PC-3 (cell line): ENCODE measurements at regions of chr3 and their contacts with region 1.

Region 1: GRCh38 chr3:168459226-168459784 is 363.6 kb upstream of the GOLIM4 start:
- DNase-seq: peak; percentile 62
- ATAC-seq: peak; percentile 43
- H3K4me3 ChIP-seq: no peak overlapping the region
- H3K27ac ChIP-seq: 0 out of 2 replicates have a peak overlapping the region, but pooled peaks have one; percentile 27
- H3K4me1 ChIP-seq: peaks cover 17% of the 10 kb centered on the region
- H3K27me3 ChIP-seq: no peaks in the 10 kb centered on the region
- CTCF ChIP-seq: no peak

Region 2: DNA sequence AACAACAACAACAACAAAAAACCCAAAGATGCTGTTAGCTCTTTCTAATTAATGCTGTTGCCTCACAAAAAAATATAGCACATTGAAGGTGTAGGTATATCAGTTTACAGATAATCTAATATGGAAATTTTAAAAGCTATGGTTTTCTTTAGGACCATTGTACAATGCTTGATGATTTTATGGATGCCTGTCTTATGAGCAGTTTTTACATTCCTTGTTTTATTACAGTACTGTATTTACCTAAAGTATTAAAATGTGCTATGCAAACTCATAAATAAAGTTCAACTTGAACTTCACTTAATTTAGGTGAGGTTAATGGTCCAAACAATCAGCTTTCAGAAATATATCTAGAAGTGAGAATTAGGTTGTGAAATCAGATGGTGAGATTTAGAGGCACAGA is 151.4 kb before region 1 on chr3:
- CTCF ChIA-PET with region 1: no interaction called
- POLR2A ChIA-PET with region 1: no interaction called
- intact Hi-C with region 1: loop called (anchors 1 kb)
- DNase-seq: peak; percentile 30
- ATAC-seq: peak; percentile 91
- H3K4me3 ChIP-seq: no peak overlapping the region
- H3K27ac ChIP-seq: no peak overlapping the region
- H3K4me1 ChIP-seq: peaks cover 11% of the 10 kb centered on the region; the same call in 1 of the 2 replicates
- H3K27me3 ChIP-seq: no peaks in the 10 kb centered on the region
- CTCF ChIP-seq: no peak

Region 3: GRCh38 chr3:168341956-168342936 is 117.1 kb before region 1 on chr3:
- CTCF ChIA-PET with region 1: no interaction called
- POLR2A ChIA-PET with region 1: no interaction called
- intact Hi-C with region 1: loop called (anchors 1 kb)
- DNase-seq: peak; percentile 61
- ATAC-seq: peak; percentile 77
- H3K4me3 ChIP-seq: peak overlapping the region; percentile 29
- H3K27ac ChIP-seq: peak overlapping the region; percentile 48
- H3K4me1 ChIP-seq: peaks cover 38% of the 10 kb centered on the region
- H3K27me3 ChIP-seq: no peaks in the 10 kb centered on the region
- CTCF ChIP-seq: no peak

Region 4: GRCh38 chr3:168425936-168426595 is 33.2 kb before region 1 on chr3:
- CTCF ChIA-PET with region 1: no interaction called
- POLR2A ChIA-PET with region 1: no interaction called
- intact Hi-C with region 1: loop called (anchors 1 kb)
- DNase-seq: peak; percentile 89
- ATAC-seq: peak; percentile 81
- H3K4me3 ChIP-seq: no peak overlapping the region
- H3K27ac ChIP-seq: peak overlapping the region; percentile 80
- H3K4me1 ChIP-seq: peaks cover 37% of the 10 kb centered on the region
- H3K27me3 ChIP-seq: no peaks in the 10 kb centered on the region
- CTCF ChIP-seq: no peak